Caco-2 (cell line): ENCODE measurements at regions of chr7 and their contacts with region 1.

Region 1: GRCh38 chr7:19982841-19983835 is 209.7 kb upstream of the TMEM196 start:
- DNase-seq: peak; percentile 81 to 82
- H3K4me3 ChIP-seq: no peak overlapping the region
- H3K4me3 Mint-ChIP-seq: no peak overlapping the region
- H3K27ac Mint-ChIP-seq: peak overlapping the region; percentile 37
- H3K4me1 ChIP-seq: peaks cover 14% of the 10 kb centered on the region
- H3K4me1 Mint-ChIP-seq: peaks cover 10% of the 10 kb centered on the region
- H3K27me3 ChIP-seq: no peaks in the 10 kb centered on the region
- H3K27me3 Mint-ChIP-seq: no peaks in the 10 kb centered on the region
- CTCF ChIP-seq: peak; percentile 46 to 63

Region 2: DNA sequence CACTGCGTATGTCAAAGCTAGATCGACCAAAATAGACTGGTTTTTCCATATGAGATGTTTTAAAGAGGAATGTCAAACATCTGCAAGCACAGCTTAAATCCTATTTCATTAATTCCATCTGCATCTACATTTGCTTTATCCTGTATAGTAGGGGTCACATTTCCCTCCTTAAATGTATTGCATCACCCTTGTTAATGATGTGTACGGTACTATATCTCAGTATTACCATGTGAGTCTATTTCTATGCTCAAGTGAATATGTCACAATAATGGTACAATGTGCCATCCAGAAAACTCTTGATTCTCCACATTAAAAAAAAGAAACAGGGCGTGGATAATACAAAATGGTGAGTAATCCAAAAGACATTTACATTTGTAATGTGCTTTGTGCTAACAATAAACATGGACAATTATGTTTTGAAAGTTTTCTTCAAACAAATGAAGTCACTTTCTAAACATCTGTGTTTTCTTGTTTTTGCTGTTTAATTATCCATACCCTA is 922.3 kb before region 1 on chr7:
- CTCF ChIA-PET with region 1: no interaction called
- POLR2A ChIA-PET with region 1: no interaction called
- intact Hi-C with region 1: no loop called
- DNase-seq: no peak
- H3K4me3 ChIP-seq: no peak overlapping the region
- H3K4me3 Mint-ChIP-seq: no peak overlapping the region
- H3K27ac Mint-ChIP-seq: no peak overlapping the region
- H3K4me1 ChIP-seq: no peaks in the 10 kb centered on the region
- H3K4me1 Mint-ChIP-seq: no peaks in the 10 kb centered on the region
- H3K27me3 ChIP-seq: no peaks in the 10 kb centered on the region
- H3K27me3 Mint-ChIP-seq: no peaks in the 10 kb centered on the region
- CTCF ChIP-seq: no peak

Region 3: GRCh38 chr7:19248681-19249080 is 734.5 kb before region 1 on chr7:
- CTCF ChIA-PET with region 1: no interaction called
- POLR2A ChIA-PET with region 1: no interaction called
- intact Hi-C with region 1: no loop called
- DNase-seq: no peak
- H3K4me3 ChIP-seq: no peak overlapping the region
- H3K4me3 Mint-ChIP-seq: no peak overlapping the region
- H3K27ac Mint-ChIP-seq: no peak overlapping the region
- H3K4me1 ChIP-seq: no peaks in the 10 kb centered on the region
- H3K4me1 Mint-ChIP-seq: no peaks in the 10 kb centered on the region
- H3K27me3 ChIP-seq: no peaks in the 10 kb centered on the region
- H3K27me3 Mint-ChIP-seq: no peaks in the 10 kb centered on the region
- CTCF ChIP-seq: no peak

Region 4: DNA sequence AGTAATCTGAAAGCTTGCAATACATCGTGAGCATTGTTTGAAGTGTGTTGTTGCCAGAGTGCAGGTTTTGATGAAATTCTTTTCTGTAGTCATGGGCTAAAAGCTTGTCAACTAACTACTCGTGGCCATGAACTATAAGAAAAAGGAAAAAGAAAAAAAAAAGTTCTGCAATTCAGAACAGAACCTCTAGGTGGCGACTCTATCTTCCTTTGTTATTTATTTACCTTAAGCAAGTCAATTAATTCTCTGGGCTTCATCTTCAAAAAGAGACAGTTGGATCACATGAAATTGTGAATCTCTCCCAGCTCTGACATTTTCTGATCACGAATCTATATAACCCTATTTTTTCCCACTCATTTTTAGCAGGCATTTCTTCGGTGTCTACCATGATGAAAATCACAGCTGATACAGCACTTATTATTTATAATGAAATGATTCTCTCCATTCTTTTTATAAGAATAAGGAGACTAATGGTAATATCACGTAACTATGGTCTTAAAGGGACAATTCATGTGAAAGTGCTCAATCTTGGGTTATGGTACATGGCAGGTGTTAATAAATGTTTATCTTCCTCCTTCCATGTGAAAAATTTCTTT is 228.5 kb before region 1 on chr7:
- CTCF ChIA-PET with region 1: no interaction called
- POLR2A ChIA-PET with region 1: no interaction called
- intact Hi-C with region 1: loop called (anchors 1 kb)
- DNase-seq: peak in 1 of 2 experiments; percentile 52
- H3K4me3 ChIP-seq: no peak overlapping the region
- H3K4me3 Mint-ChIP-seq: no peak overlapping the region
- H3K27ac Mint-ChIP-seq: no peak overlapping the region
- H3K4me1 ChIP-seq: peaks cover 8% of the 10 kb centered on the region; the same call in 1 of the 2 replicates
- H3K4me1 Mint-ChIP-seq: peaks cover 6% of the 10 kb centered on the region
- H3K27me3 ChIP-seq: no peaks in the 10 kb centered on the region
- H3K27me3 Mint-ChIP-seq: no peaks in the 10 kb centered on the region
- CTCF ChIP-seq: peak; percentile 65 to 78

Region 5: DNA sequence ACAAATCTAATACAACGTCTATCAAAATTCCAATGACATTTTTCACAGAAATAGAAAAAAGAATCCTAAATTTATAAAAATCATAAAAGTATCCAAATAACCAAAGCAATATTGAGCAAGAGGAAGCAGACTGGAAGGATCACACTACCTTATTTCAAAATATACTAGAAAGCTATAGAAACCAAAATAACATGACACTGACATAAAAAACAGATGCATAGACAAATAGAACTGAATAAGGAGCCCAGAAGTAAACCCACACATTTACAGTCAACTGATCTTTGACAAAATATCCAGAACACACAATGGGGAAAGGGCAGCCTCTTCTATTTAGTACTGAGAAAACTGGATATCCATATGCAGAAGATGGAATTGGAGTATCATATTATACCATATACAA is 16.5 kb after region 1 on chr7:
- CTCF ChIA-PET with region 1: no interaction called
- POLR2A ChIA-PET with region 1: no interaction called
- intact Hi-C with region 1: no loop called
- DNase-seq: no peak
- H3K4me3 ChIP-seq: no peak overlapping the region
- H3K4me3 Mint-ChIP-seq: no peak overlapping the region
- H3K27ac Mint-ChIP-seq: no peak overlapping the region
- H3K4me1 ChIP-seq: no peaks in the 10 kb centered on the region
- H3K4me1 Mint-ChIP-seq: no peaks in the 10 kb centered on the region
- H3K27me3 ChIP-seq: no peaks in the 10 kb centered on the region
- H3K27me3 Mint-ChIP-seq: no peaks in the 10 kb centered on the region
- CTCF ChIP-seq: no peak

Region 6: DNA sequence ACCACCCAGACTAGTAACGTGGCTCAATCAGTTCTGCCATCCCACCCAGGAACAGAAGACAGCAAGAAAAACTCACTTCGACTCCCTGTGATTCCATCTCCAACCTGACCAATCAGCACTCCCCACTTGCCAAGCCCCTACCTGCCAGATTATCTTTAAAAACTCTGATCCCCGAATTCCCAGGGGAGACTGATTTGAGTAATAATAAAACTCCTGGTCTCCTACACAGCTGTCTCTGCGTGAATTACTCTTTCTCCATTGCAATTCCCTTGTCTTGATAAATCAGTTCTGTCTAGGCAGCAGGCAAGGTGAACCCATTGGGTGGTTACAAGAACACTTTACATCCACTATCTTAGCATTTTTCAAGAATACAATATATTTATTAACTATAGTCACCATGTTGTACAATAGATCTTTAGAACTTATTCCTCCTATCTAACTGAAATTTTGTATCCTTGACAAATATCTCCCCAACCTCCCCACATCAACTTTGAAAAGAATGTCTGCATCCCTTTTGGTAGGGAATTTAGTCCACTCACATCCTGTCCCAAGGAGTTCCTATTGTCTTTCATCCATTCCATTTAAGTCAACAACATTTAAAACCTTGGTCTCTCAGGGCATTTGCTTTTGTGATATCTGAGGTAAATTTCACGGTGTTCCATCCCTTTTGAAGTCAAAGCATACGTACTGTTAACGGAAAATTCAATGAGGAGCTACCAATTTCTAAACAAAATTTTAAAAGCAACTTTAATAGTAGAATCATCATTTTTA is 70.4 kb after region 1 on chr7:
- CTCF ChIA-PET with region 1: interaction called, 6 read pairs
- POLR2A ChIA-PET with region 1: interaction called, 3 read pairs
- intact Hi-C with region 1: loop called (anchors 1 kb)
- DNase-seq: no peak
- H3K4me3 ChIP-seq: no peak overlapping the region
- H3K4me3 Mint-ChIP-seq: no peak overlapping the region
- H3K27ac Mint-ChIP-seq: peak overlapping the region; percentile 74
- H3K4me1 ChIP-seq: peaks cover 36% of the 10 kb centered on the region
- H3K4me1 Mint-ChIP-seq: peaks cover 28% of the 10 kb centered on the region
- H3K27me3 ChIP-seq: no peaks in the 10 kb centered on the region
- H3K27me3 Mint-ChIP-seq: no peaks in the 10 kb centered on the region
- CTCF ChIP-seq: no peak

Region 7: GRCh38 chr7:20083781-20084180 is 100.6 kb after region 1 on chr7:
- CTCF ChIA-PET with region 1: no interaction called
- POLR2A ChIA-PET with region 1: no interaction called
- intact Hi-C with region 1: no loop called
- DNase-seq: peak; percentile 34 to 64
- H3K4me3 ChIP-seq: no peak overlapping the region
- H3K4me3 Mint-ChIP-seq: no peak overlapping the region
- H3K27ac Mint-ChIP-seq: peak overlapping the region; percentile 74
- H3K4me1 ChIP-seq: peaks cover 36% of the 10 kb centered on the region
- H3K4me1 Mint-ChIP-seq: peaks cover 34% of the 10 kb centered on the region
- H3K27me3 ChIP-seq: no peaks in the 10 kb centered on the region
- H3K27me3 Mint-ChIP-seq: no peaks in the 10 kb centered on the region
- CTCF ChIP-seq: no peak

Region 8: GRCh38 chr7:20132631-20133030 is 149.5 kb after region 1 on chr7:
- CTCF ChIA-PET with region 1: no interaction called
- POLR2A ChIA-PET with region 1: no interaction called
- intact Hi-C with region 1: loop called (anchors 2 kb)
- DNase-seq: no peak
- H3K4me3 ChIP-seq: no peak overlapping the region
- H3K4me3 Mint-ChIP-seq: no peak overlapping the region
- H3K27ac Mint-ChIP-seq: peak overlapping the region; percentile 29
- H3K4me1 ChIP-seq: peaks cover 13% of the 10 kb centered on the region
- H3K4me1 Mint-ChIP-seq: peaks cover 15% of the 10 kb centered on the region
- H3K27me3 ChIP-seq: no peaks in the 10 kb centered on the region
- H3K27me3 Mint-ChIP-seq: no peaks in the 10 kb centered on the region
- CTCF ChIP-seq: no peak

Region 9: GRCh38 chr7:20310963-20311742 is 328.0 kb after region 1 on chr7:
- CTCF ChIA-PET with region 1: interaction called, 3 read pairs
- POLR2A ChIA-PET with region 1: no interaction called
- intact Hi-C with region 1: loop called (anchors 1 kb)
- DNase-seq: peak in 1 of 2 experiments; percentile 58
- H3K4me3 ChIP-seq: no peak overlapping the region
- H3K4me3 Mint-ChIP-seq: no peak overlapping the region
- H3K27ac Mint-ChIP-seq: no peak overlapping the region
- H3K4me1 ChIP-seq: peaks cover 27% of the 10 kb centered on the region
- H3K4me1 Mint-ChIP-seq: peaks cover 32% of the 10 kb centered on the region
- H3K27me3 ChIP-seq: no peaks in the 10 kb centered on the region
- H3K27me3 Mint-ChIP-seq: no peaks in the 10 kb centered on the region
- CTCF ChIP-seq: peak; percentile 38 to 51

Region 10: DNA sequence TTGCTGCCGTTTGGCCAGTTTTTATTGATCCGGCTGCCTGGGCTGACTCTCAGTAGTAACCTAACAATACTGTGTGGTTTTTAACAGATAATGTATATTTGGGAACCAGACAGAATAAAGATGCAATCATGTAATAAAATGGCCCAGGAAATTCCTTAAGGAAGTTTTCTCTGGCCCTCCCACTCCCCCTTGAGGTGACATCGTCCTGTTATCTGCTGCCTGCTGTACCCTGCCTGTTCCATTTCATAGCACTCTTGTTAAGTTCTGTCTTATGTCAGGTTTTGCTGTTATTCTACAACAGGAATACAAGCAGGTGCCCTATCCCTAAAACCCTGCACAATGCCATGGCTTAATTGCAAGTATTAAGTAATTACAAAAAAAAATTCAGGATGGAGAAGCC is 360.1 kb after region 1 on chr7:
- CTCF ChIA-PET with region 1: no interaction called
- POLR2A ChIA-PET with region 1: no interaction called
- intact Hi-C with region 1: loop called (anchors 1 kb)
- DNase-seq: peak in 1 of 2 experiments; percentile 35
- H3K4me3 ChIP-seq: no peak overlapping the region
- H3K4me3 Mint-ChIP-seq: no peak overlapping the region
- H3K27ac Mint-ChIP-seq: no peak overlapping the region
- H3K4me1 ChIP-seq: no peaks in the 10 kb centered on the region
- H3K4me1 Mint-ChIP-seq: no peaks in the 10 kb centered on the region
- H3K27me3 ChIP-seq: no peaks in the 10 kb centered on the region
- H3K27me3 Mint-ChIP-seq: no peaks in the 10 kb centered on the region
- CTCF ChIP-seq: peak; percentile 40 to 54